MCF 10A (cell line): ENCODE measurements at regions of chr1 and their contacts with region 1.

Region 1: DNA sequence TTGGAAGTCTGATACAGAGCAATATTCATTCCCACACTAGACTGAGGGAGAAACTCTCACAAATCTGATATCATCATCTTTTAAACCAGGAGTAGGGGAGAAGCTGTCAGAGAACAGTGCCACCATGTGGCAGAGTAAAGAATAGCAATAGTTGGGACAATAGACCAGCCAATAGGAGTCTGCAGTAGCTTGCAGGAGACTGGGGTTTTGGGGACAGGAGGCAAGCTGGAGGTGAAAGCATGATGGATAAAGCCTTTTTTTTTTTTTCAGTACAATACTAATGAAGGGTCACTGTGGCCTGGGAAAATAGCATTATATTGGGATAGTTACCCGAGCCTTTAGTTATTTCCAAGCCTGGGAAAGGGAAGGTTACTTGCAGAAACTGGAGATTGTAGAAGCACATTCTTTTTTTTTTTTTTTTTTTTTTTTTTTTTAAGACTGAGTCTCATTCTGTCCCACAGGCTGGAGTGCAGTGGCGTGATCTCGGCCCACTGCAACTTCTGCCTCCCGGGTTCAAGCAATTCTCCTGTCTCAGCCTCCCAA is 120.7 kb downstream of the S1PR1 start:
- DNase-seq: peak; percentile 85
- H3K4me3 Mint-ChIP-seq: no peak overlapping the region
- H3K27ac Mint-ChIP-seq: no peak overlapping the region
- H3K4me1 Mint-ChIP-seq: no peaks in the 10 kb centered on the region
- H3K27me3 Mint-ChIP-seq: peaks cover 58% of the 10 kb centered on the region
- CTCF ChIP-seq: peak; percentile 71

Region 2: DNA sequence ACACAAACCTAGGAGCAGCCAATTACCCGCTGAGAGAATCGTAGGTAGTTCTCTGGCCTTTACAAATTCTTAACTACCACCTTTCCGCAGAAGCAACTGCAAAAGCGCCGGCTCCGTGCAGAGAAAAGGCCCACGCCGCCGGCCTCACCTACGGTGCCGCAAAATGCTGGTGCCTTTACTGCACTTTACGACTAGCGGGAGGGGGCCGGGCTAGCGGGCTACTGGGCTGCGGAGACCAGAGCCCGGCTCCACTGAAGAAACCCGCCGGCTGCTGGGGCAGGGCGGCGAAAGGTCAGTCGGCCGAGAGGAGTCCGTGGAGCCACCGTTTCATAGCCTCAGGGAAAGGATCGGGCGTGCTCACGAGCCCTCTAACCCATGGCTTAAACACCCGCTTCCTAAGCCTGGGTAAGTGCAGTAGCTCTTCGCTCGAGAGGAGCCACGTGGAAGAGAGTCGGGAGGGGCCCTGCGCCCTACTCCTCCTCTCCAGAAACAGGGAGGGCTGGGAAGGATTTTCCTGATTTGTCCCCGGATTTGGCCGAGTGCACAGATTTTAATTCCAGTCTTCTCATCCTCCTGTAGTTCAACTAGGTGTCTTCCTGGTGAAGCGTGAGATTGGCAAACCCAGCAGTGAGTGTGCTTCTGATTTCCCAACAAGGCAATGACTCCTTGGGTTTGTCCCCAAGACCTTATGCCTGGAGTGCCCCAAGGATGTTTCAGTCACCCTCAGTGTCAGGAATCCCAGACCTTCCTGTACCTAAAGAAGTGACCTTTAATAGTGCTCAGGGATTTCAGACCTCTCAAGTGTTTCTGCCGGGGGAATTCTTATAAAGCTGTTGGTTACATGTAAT is 331.6 kb before region 1 on chr1 and contains the start of gene DPH5:
- CTCF ChIA-PET with region 1: no interaction called
- POLR2A ChIA-PET with region 1: no interaction called
- intact Hi-C with region 1: loop called (anchors 10 kb)
- DNase-seq: peak; percentile 90
- H3K4me3 Mint-ChIP-seq: peak within 1 kb of the TSS; percentile 78
- H3K27ac Mint-ChIP-seq: peak within 1 kb of the TSS; percentile 79
- H3K4me1 Mint-ChIP-seq: peaks cover 14% of the 10 kb centered on the region
- H3K27me3 Mint-ChIP-seq: no peaks in the 10 kb centered on the region
- CTCF ChIP-seq: no peak
- total RNA-seq, gene DPH5: 63.5 and 76.8 TPM in 2 replicates

Region 3: DNA sequence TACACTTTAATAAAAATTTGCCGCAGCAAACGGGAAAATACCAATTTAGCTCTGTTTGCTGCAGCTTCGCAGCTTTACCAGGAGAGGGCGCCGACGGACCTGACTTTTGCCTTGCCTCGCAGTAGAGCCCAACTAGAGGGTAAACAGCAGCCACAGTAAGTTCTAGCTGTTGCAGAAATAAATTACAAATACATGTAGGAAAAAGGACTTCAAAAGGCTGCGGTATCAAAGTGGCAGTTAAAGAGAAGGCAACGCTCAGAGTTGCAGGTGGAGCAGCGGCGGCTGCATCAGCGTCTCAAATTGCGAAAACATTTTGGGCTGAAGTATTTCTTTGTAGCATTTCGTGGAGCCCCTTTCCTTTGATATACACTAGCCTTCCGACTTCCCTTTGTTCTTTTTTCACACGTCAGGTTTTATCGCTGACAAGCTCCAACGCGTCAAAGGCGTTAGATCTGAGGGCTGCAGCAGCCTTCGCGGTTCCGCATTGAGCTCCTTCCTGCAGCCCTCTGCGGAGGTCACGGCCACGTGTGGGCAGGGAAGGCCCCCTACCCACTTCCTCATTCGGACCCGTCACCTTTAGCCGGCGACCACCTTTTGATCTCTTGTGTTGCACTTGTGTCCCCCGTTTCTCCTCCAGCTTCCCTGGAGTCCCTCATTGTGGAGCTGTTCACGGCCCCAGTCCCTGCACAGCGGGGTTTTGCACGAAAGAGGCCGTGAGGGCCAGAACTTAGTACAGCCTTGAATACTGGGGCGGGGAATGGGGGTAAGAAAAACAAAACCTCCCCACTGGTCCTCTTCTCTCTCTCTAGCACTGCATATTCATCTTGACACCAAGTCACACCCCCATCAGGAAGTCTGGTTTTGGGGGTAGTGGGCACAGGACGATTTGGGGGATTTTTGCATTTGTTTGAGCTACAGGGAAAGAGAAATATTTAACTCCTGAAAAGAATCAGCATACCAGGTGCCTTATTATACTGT is 47.9 kb before region 1 on chr1:
- CTCF ChIA-PET with region 1: interaction called, 55 read pairs
- POLR2A ChIA-PET with region 1: no interaction called
- intact Hi-C with region 1: loop called (anchors 1 kb)
- DNase-seq: peak; percentile 56
- H3K4me3 Mint-ChIP-seq: peak overlapping the region; percentile 56
- H3K27ac Mint-ChIP-seq: no peak overlapping the region
- H3K4me1 Mint-ChIP-seq: peaks cover 6% of the 10 kb centered on the region
- H3K27me3 Mint-ChIP-seq: peaks cover 79% of the 10 kb centered on the region
- CTCF ChIP-seq: peak; percentile 69

Region 4: GRCh38 chr1:101344745-101345144 is 12.8 kb before region 1 on chr1:
- CTCF ChIA-PET with region 1: interaction called, 14 read pairs
- POLR2A ChIA-PET with region 1: no interaction called
- intact Hi-C with region 1: no loop called
- DNase-seq: no peak
- H3K4me3 Mint-ChIP-seq: no peak overlapping the region
- H3K27ac Mint-ChIP-seq: no peak overlapping the region
- H3K4me1 Mint-ChIP-seq: no peaks in the 10 kb centered on the region
- H3K27me3 Mint-ChIP-seq: peaks cover 91% of the 10 kb centered on the region
- CTCF ChIP-seq: no peak